ENCODE measurements at regions of chr9 and their contacts with region 1.

Region 1: DNA sequence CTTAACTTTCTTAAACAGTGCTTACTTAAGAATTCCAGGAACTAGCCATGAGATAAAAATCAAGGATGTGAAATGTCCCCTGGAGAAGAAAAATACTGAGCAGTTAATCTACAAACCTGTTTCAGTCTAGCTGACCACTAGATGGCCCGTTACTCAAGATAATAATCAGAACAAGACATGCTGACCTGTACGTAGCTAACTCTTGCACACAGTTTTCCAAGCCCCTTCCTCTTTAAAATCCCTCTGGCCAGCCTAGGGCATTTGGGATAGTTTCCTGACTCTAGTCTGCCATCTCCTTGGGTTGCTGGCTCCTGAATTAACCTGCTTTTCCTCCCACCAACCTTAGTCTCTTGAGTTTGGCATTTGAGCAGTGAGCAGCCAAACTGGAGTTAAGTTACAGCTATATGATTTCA is 59.2 kb upstream of the TRAF1 start:
- DNase-seq: peak; percentile 61
- H3K4me3 Mint-ChIP-seq: no peak overlapping the region
- H3K27ac Mint-ChIP-seq: no peak overlapping the region
- H3K4me1 Mint-ChIP-seq: no peaks in the 10 kb centered on the region
- H3K27me3 Mint-ChIP-seq: no peaks in the 10 kb centered on the region
- CTCF ChIP-seq: peak; percentile 58

Region 2: GRCh38 chr9:120755827-120756434 is 229.9 kb before region 1 on chr9:
- CTCF ChIA-PET with region 1: interaction called, 7 read pairs
- POLR2A ChIA-PET with region 1: no interaction called
- intact Hi-C with region 1: loop called (anchors 1 kb)
- DNase-seq: peak; percentile 71
- H3K4me3 Mint-ChIP-seq: no peak overlapping the region
- H3K27ac Mint-ChIP-seq: no peak overlapping the region
- H3K4me1 Mint-ChIP-seq: peaks cover 5% of the 10 kb centered on the region
- H3K27me3 Mint-ChIP-seq: no peaks in the 10 kb centered on the region
- CTCF ChIP-seq: peak; percentile 79

Region 3: GRCh38 chr9:120960001-120960400 is 25.8 kb before region 1 on chr9:
- CTCF ChIA-PET with region 1: interaction called, 25 read pairs
- POLR2A ChIA-PET with region 1: interaction called, 3 read pairs
- intact Hi-C with region 1: no loop called
- DNase-seq: no peak
- H3K4me3 Mint-ChIP-seq: no peak overlapping the region
- H3K27ac Mint-ChIP-seq: no peak overlapping the region
- H3K4me1 Mint-ChIP-seq: no peaks in the 10 kb centered on the region
- H3K27me3 Mint-ChIP-seq: no peaks in the 10 kb centered on the region
- CTCF ChIP-seq: no peak

Region 4: GRCh38 chr9:120965344-120966012 is 20.3 kb before region 1 on chr9:
- CTCF ChIA-PET with region 1: interaction called, 25 read pairs
- POLR2A ChIA-PET with region 1: interaction called, 3 read pairs
- intact Hi-C with region 1: no loop called
- DNase-seq: no peak
- H3K4me3 Mint-ChIP-seq: no peak overlapping the region
- H3K27ac Mint-ChIP-seq: peak overlapping the region; percentile 7
- H3K4me1 Mint-ChIP-seq: peaks cover 11% of the 10 kb centered on the region
- H3K27me3 Mint-ChIP-seq: no peaks in the 10 kb centered on the region
- CTCF ChIP-seq: no peak

Region 5: DNA sequence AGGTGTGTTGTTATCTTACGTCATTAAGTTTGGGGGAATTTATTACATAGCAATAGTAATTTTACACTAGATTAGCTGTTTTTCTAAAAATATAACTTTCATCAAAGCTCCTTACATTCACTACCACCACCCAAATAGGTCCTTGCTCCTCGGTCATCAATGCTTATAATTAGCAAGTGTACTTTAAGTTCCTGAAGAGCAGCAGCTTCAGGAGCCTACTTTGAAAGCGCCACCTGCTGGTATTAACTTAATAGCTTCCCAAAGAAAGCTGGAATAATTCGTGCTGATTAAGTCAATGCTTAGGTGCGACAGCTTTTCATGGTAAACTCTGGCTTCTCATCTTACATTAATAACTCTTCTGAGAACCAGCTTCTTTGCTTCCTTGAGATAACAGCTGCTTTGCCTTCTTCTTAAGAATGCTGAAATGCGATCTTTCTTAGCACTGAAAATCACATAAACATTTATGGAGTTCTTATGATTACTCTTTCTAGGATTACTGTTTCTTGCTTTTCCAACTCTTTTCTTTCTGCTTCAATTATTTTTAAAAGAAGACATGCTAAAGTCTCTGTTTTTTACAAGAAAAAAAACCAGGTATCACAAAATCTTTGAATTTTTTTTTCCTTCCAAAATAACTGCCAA is 74.3 kb after region 1 on chr9:
- CTCF ChIA-PET with region 1: interaction called, 111 read pairs
- POLR2A ChIA-PET with region 1: interaction called, 9 read pairs
- intact Hi-C with region 1: loop called (anchors 1 kb)
- DNase-seq: peak; percentile 66
- H3K4me3 Mint-ChIP-seq: no peak overlapping the region
- H3K27ac Mint-ChIP-seq: no peak overlapping the region
- H3K4me1 Mint-ChIP-seq: no peaks in the 10 kb centered on the region
- H3K27me3 Mint-ChIP-seq: no peaks in the 10 kb centered on the region
- CTCF ChIP-seq: peak; percentile 53

Region 6: GRCh38 chr9:121074635-121075385 is 89.0 kb after region 1 on chr9 and contains the start of gene CNTRL:
- CTCF ChIA-PET with region 1: interaction called, 21 read pairs
- POLR2A ChIA-PET with region 1: interaction called, 3 read pairs
- intact Hi-C with region 1: no loop called
- DNase-seq: peak; percentile 92
- H3K4me3 Mint-ChIP-seq: peak within 1 kb of the TSS; percentile 92
- H3K27ac Mint-ChIP-seq: peak within 1 kb of the TSS; percentile 91
- H3K4me1 Mint-ChIP-seq: peaks cover 22% of the 10 kb centered on the region
- H3K27me3 Mint-ChIP-seq: no peaks in the 10 kb centered on the region
- CTCF ChIP-seq: no peak
- total RNA-seq, gene CNTRL: 11.6 and 18.9 TPM in 2 replicates

Measured in MCF 10A (cell line).